Activated B cell treated with CpG ODN at 0.5 μM for 24 hours (primary cell): ENCODE measurements at regions of chr17 and their contacts with region 1.

Region 1: GRCh38 chr17:71677439-71677838 is 443.4 kb upstream of the SOX9 start:
- DNase-seq: no peak
- ATAC-seq: no peak
- H3K4me3 Mint-ChIP-seq: no peak overlapping the region
- H3K27ac Mint-ChIP-seq: no peak overlapping the region
- H3K4me1 Mint-ChIP-seq: no peaks in the 10 kb centered on the region
- H3K27me3 Mint-ChIP-seq: no peaks in the 10 kb centered on the region
- CTCF ChIP-seq: no peak

Region 2: DNA sequence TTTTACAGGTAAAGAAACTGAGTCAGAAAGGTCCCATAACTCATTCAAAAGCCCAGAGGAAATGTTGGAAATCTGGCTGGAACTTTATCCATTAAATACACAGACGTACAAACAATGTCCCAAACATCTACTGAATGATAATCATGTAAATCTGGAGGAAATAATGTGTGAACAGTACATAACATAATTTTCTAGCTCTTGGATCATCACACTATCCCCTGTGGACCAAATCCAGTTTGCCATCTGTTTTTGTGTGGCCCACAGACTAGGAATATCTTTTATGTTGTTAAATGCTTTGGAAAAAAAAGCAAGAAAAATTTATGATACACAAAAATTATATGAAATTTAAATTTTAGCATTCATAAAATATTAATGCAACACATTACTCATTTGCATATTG is 53.4 kb after region 1 on chr17:
- CTCF ChIA-PET with region 1: no interaction called
- POLR2A ChIA-PET with region 1: no interaction called
- intact Hi-C with region 1: loop called (anchors 10 kb)
- DNase-seq: no peak
- ATAC-seq: no peak
- H3K4me3 Mint-ChIP-seq: no peak overlapping the region
- H3K27ac Mint-ChIP-seq: no peak overlapping the region
- H3K4me1 Mint-ChIP-seq: no peaks in the 10 kb centered on the region
- H3K27me3 Mint-ChIP-seq: no peaks in the 10 kb centered on the region
- CTCF ChIP-seq: no peak